Caco-2 (cell line): ENCODE measurements at regions of chr17 and their contacts with region 1.

Region 1: DNA sequence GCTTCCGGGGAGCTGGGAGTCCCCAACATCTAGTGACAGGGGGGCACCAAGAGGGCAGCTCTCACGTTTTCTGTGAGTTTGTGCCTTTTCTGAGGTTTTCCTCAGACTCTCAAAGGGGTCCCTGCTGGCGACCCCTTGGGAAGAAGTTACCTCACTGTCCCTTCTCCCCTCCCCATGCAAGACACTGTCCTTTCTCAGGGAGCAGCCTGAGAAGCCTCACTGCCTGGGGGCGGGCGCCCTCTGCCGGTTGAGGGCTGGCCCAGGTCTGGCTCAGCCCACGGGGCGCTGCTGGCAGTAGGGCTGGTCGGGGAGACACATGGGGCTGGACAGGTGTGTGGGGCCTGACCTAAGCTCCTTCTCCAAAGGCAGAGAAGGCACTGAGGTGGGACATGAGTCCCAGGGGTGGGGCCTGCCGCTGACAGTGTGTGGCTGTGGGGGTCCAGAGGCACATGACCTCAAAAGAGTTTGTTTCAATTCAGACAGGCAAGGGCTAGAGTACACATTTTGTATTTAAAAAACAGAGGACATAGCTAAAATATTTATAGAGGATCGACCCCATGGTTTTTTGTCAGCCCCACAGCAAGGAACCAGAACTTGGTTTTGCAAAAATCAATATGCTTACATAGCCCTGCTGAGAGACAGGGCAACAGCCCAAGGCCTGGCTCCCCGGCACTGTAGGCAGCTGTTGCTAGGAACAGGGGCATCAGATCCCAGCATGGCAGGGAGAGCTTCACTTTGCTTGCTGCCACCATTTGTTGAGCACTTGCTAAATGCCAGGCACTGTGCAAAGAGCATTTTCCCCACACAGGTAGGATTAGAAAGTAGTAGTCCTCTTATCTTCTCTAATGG is 18.5 kb upstream of the ALDH3A1 start:
- DNase-seq: peak; percentile 77 to 90
- H3K4me3 ChIP-seq: no peak overlapping the region
- H3K4me3 Mint-ChIP-seq: no peak overlapping the region
- H3K27ac Mint-ChIP-seq: no peak overlapping the region
- H3K4me1 ChIP-seq: 0 out of 2 replicates have a peak, but pooled peaks cover 7% of the 10 kb centered on the region
- H3K4me1 Mint-ChIP-seq: no peaks in the 10 kb centered on the region
- H3K27me3 ChIP-seq: no peaks in the 10 kb centered on the region
- H3K27me3 Mint-ChIP-seq: no peaks in the 10 kb centered on the region
- CTCF ChIP-seq: peak; percentile 97 to 99

Region 2: GRCh38 chr17:19447085-19447583 is 319.5 kb before region 1 on chr17:
- CTCF ChIA-PET with region 1: no interaction called
- POLR2A ChIA-PET with region 1: no interaction called
- intact Hi-C with region 1: loop called (anchors 1 kb)
- DNase-seq: peak; percentile 60 to 86
- H3K4me3 ChIP-seq: no peak overlapping the region
- H3K4me3 Mint-ChIP-seq: no peak overlapping the region
- H3K27ac Mint-ChIP-seq: no peak overlapping the region
- H3K4me1 ChIP-seq: peaks cover 10% of the 10 kb centered on the region; the same call in 1 of the 2 replicates
- H3K4me1 Mint-ChIP-seq: peaks cover 8% of the 10 kb centered on the region
- H3K27me3 ChIP-seq: no peaks in the 10 kb centered on the region
- H3K27me3 Mint-ChIP-seq: peaks cover 3% of the 10 kb centered on the region
- CTCF ChIP-seq: peak; percentile 87 to 96

Region 3: GRCh38 chr17:19590912-19591551 is 175.6 kb before region 1 on chr17:
- CTCF ChIA-PET with region 1: interaction called, 6 read pairs
- POLR2A ChIA-PET with region 1: no interaction called
- intact Hi-C with region 1: loop called (anchors 5 kb)
- DNase-seq: peak in 1 of 2 experiments; percentile 18
- H3K4me3 ChIP-seq: no peak overlapping the region
- H3K4me3 Mint-ChIP-seq: no peak overlapping the region
- H3K27ac Mint-ChIP-seq: no peak overlapping the region
- H3K4me1 ChIP-seq: no peaks in the 10 kb centered on the region
- H3K4me1 Mint-ChIP-seq: no peaks in the 10 kb centered on the region
- H3K27me3 ChIP-seq: no peaks in the 10 kb centered on the region
- H3K27me3 Mint-ChIP-seq: no peaks in the 10 kb centered on the region
- CTCF ChIP-seq: peak in 1 of 2 experiments; percentile 30

Region 4: GRCh38 chr17:19703106-19703827 is 63.4 kb before region 1 on chr17:
- CTCF ChIA-PET with region 1: interaction called, 4 read pairs
- POLR2A ChIA-PET with region 1: no interaction called
- intact Hi-C with region 1: loop called (anchors 5 kb)
- DNase-seq: no peak
- H3K4me3 ChIP-seq: no peak overlapping the region
- H3K4me3 Mint-ChIP-seq: peak overlapping the region; percentile 9
- H3K27ac Mint-ChIP-seq: no peak overlapping the region
- H3K4me1 ChIP-seq: peaks cover 13% of the 10 kb centered on the region
- H3K4me1 Mint-ChIP-seq: peaks cover 16% of the 10 kb centered on the region
- H3K27me3 ChIP-seq: no peaks in the 10 kb centered on the region
- H3K27me3 Mint-ChIP-seq: no peaks in the 10 kb centered on the region
- CTCF ChIP-seq: no peak

Region 5: GRCh38 chr17:19886116-19886515 is 119.5 kb after region 1 on chr17:
- CTCF ChIA-PET with region 1: no interaction called
- POLR2A ChIA-PET with region 1: no interaction called
- intact Hi-C with region 1: no loop called
- DNase-seq: no peak
- H3K4me3 ChIP-seq: no peak overlapping the region
- H3K4me3 Mint-ChIP-seq: no peak overlapping the region
- H3K27ac Mint-ChIP-seq: no peak overlapping the region
- H3K4me1 ChIP-seq: no peaks in the 10 kb centered on the region
- H3K4me1 Mint-ChIP-seq: no peaks in the 10 kb centered on the region
- H3K27me3 ChIP-seq: no peaks in the 10 kb centered on the region
- H3K27me3 Mint-ChIP-seq: no peaks in the 10 kb centered on the region
- CTCF ChIP-seq: no peak